Panc1 (cell line): ENCODE measurements at regions of chr11 and their contacts with region 1.

Region 1: GRCh38 chr11:1546536-1547400 is 25.3 kb downstream of the DUSP8 start:
- DNase-seq: no peak
- ATAC-seq: peak; percentile 82
- H3K4me3 ChIP-seq: peak overlapping the region; percentile 50 to 57
- H3K27ac ChIP-seq: no peak overlapping the region
- H3K4me1 ChIP-seq: peaks cover 10% of the 10 kb centered on the region
- H3K27me3 ChIP-seq: 0 out of 2 replicates have a peak, but pooled peaks cover 2% of the 10 kb centered on the region
- CTCF ChIP-seq: peak; percentile 100

Region 2: DNA sequence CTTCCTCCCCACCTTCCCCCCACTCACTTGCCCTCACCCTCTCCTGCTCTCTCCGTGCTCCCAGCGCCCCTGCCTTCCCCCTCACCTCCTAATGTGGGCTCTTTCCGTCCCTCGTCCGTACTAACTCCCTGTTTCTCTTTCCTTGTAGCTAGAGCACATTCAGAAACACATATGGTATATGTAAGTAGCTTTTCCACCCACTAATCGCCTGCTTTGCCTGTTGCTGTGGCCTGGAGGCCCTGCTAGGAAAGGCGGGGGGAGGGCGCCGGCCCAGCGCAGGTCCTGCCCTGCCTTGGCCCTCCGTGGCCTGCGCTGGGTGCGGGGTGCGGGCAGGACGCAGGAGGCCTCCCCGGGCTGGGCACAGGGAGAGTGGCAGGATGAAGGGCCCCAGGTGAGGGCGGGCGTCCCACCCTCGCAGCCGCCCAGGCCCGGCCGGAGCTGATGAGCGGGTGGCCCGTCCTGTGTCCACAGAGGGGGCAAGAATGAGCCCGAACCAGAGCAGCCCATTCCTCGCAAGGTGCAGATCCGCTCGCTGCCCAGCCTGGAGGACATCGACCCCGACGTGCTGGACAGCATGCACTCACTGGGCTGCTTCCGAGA is 101.8 kb before region 1 on chr11:
- CTCF ChIA-PET with region 1: interaction called, 19 read pairs
- POLR2A ChIA-PET with region 1: interaction called, 4 read pairs
- in situ Hi-C with region 1: no loop called
- intact Hi-C with region 1: no loop called
- DNase-seq: no peak
- ATAC-seq: no peak
- H3K4me3 ChIP-seq: no peak overlapping the region
- H3K27ac ChIP-seq: no peak overlapping the region
- H3K4me1 ChIP-seq: peaks cover 15% of the 10 kb centered on the region
- H3K27me3 ChIP-seq: no peaks in the 10 kb centered on the region
- CTCF ChIP-seq: no peak

Region 3: GRCh38 chr11:1559119-1559951 is 12.6 kb after region 1 on chr11:
- CTCF ChIA-PET with region 1: interaction called, 10 read pairs
- POLR2A ChIA-PET with region 1: no interaction called
- in situ Hi-C with region 1: no loop called
- intact Hi-C with region 1: no loop called
- DNase-seq: peak; percentile 50
- ATAC-seq: peak; percentile 55
- H3K4me3 ChIP-seq: 0 out of 4 replicates have a peak overlapping the region, but pooled peaks of 1 of the 2 experiments have one; percentile 4
- H3K27ac ChIP-seq: peak overlapping the region; percentile 1; the same call in 1 of the 2 replicates
- H3K4me1 ChIP-seq: peaks cover 17% of the 10 kb centered on the region
- H3K27me3 ChIP-seq: no peaks in the 10 kb centered on the region
- CTCF ChIP-seq: no peak

Region 4: DNA sequence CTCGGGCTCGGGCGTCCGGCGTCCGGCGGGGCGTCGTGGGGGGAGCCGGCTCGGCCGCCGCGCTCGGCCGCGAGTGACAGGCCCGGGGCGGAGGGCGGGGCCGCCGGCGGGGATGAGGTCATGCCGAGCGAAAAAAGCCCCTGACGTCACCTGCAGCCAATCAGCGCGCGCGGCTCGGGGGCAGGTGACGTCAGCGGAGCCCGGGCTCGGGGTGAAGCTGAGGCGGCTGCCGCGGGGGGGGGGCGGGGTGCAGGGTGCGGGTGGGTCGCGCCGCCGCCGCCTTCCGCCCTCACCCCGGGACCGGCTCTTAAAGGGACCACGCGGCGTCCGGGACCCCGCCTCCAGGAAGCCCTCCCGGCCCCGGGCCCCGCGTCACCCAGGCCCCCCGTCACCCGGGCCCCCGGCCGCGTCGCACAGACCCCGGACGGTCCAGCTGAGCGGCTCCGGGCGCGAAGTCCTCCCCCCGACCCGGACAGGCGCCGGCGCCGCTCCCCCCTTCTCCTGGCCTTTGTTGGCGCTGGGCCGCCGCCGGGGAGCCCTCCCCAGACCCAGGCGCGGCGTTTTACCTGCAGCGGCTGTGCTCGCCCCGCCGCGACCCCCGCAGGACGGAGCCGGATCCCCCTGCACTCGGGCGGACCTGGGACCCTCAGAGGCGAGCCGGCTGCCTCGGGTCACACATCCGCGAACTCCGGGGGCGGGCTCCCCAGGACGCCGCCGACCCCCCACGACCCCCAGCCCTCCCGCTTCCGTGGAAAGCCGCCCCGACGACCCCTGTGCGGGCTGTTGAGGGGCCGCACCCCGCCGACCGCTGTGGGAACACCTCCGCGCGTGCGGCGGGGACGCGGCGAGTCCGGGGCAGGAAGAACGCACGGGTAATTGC is 25.7 kb after region 1 on chr11 and contains the start of gene DUSP8:
- CTCF ChIA-PET with region 1: interaction called, 95 read pairs
- POLR2A ChIA-PET with region 1: no interaction called
- in situ Hi-C with region 1: no loop called
- intact Hi-C with region 1: loop called (anchors 1 kb)
- DNase-seq: no peak
- ATAC-seq: peak; percentile 65
- H3K4me3 ChIP-seq: peak within 1 kb of the TSS; percentile 41 to 59
- H3K27ac ChIP-seq: no peak within 1 kb of the TSS
- H3K4me1 ChIP-seq: peaks cover 21% of the 10 kb centered on the region
- H3K27me3 ChIP-seq: no peaks in the 10 kb centered on the region; the same call in 1 of the 2 replicates
- CTCF ChIP-seq: no peak
- total RNA-seq, gene DUSP8: 5.5 TPM

Region 5: DNA sequence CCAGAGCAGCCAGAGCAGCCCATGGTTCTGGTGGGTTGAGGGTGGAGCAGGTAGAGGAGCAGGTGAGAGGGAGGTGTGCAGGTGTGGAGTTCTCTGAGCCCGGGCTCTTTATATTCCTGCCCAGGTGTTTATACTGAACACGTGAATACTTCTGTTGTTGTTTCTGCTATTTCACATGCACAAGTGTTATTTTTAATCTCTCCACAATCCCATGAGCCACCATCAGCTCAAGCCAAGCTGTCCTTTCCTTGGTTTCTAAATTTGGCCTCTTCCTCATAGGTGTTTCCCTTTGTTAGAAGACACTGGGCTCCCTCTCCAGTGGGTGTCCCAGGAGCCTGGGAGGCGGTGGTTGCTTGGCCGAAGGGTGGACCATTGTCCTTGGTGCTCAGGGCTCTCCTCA is 61.6 kb after region 1 on chr11 and contains the start of gene KRTAP5-3:
- CTCF ChIA-PET with region 1: no interaction called
- POLR2A ChIA-PET with region 1: no interaction called
- in situ Hi-C with region 1: no loop called
- intact Hi-C with region 1: no loop called
- DNase-seq: no peak
- ATAC-seq: no peak
- H3K4me3 ChIP-seq: no peak within 1 kb of the TSS
- H3K27ac ChIP-seq: no peak within 1 kb of the TSS
- H3K4me1 ChIP-seq: no peaks in the 10 kb centered on the region
- H3K27me3 ChIP-seq: 0 out of 2 replicates have a peak, but pooled peaks cover 2% of the 10 kb centered on the region
- CTCF ChIP-seq: no peak
- total RNA-seq, gene KRTAP5-3: not detected

Region 6: DNA sequence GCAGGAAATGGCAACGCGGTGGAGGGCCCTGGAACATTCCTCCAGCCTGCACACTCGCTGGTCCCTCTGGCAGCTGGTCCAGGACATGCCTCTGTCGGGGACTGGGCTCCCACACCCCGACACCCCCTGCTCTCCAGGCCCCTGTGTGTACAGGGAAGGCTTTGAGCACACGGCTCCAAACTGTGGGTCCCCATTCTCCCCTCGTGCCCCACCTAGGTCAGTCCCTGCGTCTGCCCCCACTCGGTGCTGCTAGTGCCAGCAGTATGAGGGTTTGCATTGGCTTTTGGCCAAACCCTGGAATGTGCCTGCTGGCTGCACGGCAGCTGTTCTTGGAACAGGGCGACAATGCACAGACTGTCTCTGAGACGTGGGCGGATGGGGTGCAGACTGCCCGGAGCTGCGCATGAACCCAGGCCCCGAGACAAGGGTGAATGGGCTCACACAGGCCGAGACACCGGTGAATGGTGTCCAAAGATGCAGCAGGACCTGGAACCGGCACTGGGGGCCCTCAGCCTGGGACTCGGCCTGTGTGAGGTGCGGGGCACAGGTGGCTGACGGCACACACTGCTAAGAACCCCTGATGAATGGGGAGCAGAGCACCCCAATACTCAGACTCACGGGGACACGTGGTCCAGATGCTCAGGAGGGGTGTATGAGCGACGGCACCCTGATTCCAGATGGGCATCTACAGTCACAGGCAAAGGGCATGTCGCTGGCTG is 280.5 kb after region 1 on chr11:
- CTCF ChIA-PET with region 1: interaction called, 8 read pairs
- POLR2A ChIA-PET with region 1: no interaction called
- in situ Hi-C with region 1: no loop called
- intact Hi-C with region 1: loop called (anchors 10 kb)
- DNase-seq: no peak
- ATAC-seq: peak; percentile 72
- H3K4me3 ChIP-seq: no peak overlapping the region
- H3K27ac ChIP-seq: peak overlapping the region; percentile 99
- H3K4me1 ChIP-seq: peaks cover 77% of the 10 kb centered on the region
- H3K27me3 ChIP-seq: no peaks in the 10 kb centered on the region
- CTCF ChIP-seq: no peak